Right cardiac atrium (tissue), 5 donors: ENCODE measurements at regions of chr4 and their contacts with region 1.

Region 1: DNA sequence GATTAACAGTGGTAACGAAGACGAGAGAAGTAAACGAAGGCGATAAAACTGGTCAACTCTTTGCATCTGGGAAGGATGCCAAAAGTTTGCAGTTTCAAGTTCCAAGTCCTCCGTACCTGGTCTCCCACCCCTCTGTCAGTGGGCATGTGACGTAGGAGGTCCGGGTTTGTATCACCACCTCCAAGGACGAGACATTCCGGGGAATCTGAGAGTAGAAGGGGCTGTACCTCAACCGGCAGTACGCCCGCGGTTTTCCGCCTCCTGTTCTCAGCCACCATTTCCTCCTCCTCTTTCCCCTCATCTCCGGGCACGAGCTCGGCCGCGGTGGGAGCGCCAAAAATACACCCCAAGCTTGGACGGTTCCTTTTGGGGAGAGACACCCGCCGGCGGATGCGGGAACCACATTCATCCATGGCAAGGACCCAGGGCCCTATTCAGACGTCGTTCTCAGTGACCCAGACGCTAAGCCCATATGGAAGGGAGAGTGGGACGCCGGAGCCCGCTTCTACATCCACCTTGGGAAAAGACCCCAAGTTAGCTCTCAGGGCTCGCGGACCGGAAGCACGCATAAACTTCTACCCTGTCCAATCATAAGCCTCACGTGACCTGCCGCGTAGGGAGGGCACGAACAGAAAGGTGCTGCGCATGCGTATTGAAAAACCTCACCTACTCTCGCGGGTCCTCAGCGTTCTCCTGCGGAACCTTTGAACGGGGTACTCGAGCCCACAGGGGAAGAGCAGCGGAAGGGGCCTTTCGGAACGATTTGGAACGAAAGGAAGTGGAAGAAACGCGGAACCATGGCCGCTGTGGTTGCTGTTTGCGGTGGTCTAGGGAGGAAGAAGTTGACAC is at the starts of genes HELQ and MRPS18C:
- DNase-seq: peak; percentile 96 to 98 (median 97)
- ATAC-seq: peak; percentile 99
- H3K4me3 ChIP-seq: peak within 1 kb of the TSS; percentile 84
- H3K27ac ChIP-seq: peak within 1 kb of the TSS; percentile 97
- H3K4me1 ChIP-seq: peaks cover 4% of the 10 kb centered on the region
- H3K27me3 ChIP-seq: no peaks in the 10 kb centered on the region
- total RNA-seq, gene HELQ: 13.4 to 15.7 (median 14.7) TPM
- total RNA-seq, gene MRPS18C: 46.9 to 69.0 (median 48.5) TPM

Region 2: GRCh38 chr4:83284193-83285054 is 171.1 kb before region 1 on chr4 and contains the start of gene COQ2:
- intact Hi-C with region 1: loop called in 1 of 4 experiments (anchors 10 kb)
- DNase-seq: peak; percentile 97 to 99 (median 99)
- ATAC-seq: peak; percentile 96 to 98
- H3K4me3 ChIP-seq: peak within 1 kb of the TSS; percentile 43
- H3K27ac ChIP-seq: peak within 1 kb of the TSS; percentile 86
- H3K4me1 ChIP-seq: no peaks in the 10 kb centered on the region
- H3K27me3 ChIP-seq: no peaks in the 10 kb centered on the region
- total RNA-seq, gene COQ2: 12.1 to 15.9 (median 14.4) TPM

Region 3: DNA sequence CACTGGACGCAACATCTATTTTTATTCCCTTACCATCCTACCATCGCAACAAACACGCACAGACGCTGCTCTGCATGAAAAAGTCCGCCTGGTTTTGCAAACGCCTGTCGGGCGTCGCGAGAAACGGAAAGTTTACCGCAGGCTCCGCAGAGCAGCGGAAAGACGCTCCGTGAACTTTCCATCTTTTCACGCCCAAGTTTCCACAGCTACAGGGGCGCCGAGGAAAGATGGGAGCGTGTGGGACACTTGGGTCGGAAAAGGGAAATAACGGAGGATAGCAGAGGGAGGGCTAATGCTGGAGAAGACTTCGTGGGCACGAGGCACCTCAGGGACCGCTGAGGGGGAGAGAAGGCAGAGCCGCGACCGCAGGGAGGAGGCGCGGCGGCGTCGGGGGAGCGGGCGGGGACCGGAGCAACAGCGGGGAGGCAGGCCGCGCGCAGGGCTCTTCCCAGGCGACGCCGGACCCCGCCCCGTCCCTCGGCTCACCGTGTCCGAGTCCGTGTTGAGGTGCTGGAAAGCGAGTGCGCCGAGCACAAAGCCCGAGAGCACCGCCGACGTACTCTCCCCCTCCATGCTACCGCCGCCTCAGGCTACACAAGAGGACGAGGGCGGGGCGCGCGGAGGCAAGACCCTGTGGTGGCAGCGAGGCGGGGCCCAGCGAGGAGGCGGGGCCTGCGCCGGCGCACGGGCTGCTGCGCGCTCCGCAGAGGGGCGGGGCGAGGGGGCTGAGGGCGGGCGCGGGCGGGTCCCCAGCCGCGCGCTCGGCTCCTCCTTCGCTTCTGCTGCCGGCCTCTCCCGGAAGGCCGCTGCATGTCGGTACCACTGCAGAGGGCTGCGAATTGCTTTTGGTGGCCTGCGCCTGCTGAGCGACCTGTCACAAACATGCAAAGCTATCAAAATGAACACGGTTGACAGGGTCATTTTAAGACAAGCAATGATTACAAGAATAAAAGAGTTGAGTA is 29.3 kb after region 1 on chr4 and contains the start of gene ABRAXAS1:
- intact Hi-C with region 1: loop called in 1 of 4 experiments (anchors 2 kb)
- DNase-seq: peak; percentile 94 to 99 (median 98)
- ATAC-seq: peak; percentile 100
- H3K4me3 ChIP-seq: peak within 1 kb of the TSS; percentile 72
- H3K27ac ChIP-seq: peak within 1 kb of the TSS; percentile 74
- H3K4me1 ChIP-seq: no peaks in the 10 kb centered on the region
- H3K27me3 ChIP-seq: no peaks in the 10 kb centered on the region
- total RNA-seq, gene ABRAXAS1: 5.2 to 10.0 (median 7.1) TPM